ENCODE measurements at regions of chr19 and their contacts with region 1.

Region 1: DNA sequence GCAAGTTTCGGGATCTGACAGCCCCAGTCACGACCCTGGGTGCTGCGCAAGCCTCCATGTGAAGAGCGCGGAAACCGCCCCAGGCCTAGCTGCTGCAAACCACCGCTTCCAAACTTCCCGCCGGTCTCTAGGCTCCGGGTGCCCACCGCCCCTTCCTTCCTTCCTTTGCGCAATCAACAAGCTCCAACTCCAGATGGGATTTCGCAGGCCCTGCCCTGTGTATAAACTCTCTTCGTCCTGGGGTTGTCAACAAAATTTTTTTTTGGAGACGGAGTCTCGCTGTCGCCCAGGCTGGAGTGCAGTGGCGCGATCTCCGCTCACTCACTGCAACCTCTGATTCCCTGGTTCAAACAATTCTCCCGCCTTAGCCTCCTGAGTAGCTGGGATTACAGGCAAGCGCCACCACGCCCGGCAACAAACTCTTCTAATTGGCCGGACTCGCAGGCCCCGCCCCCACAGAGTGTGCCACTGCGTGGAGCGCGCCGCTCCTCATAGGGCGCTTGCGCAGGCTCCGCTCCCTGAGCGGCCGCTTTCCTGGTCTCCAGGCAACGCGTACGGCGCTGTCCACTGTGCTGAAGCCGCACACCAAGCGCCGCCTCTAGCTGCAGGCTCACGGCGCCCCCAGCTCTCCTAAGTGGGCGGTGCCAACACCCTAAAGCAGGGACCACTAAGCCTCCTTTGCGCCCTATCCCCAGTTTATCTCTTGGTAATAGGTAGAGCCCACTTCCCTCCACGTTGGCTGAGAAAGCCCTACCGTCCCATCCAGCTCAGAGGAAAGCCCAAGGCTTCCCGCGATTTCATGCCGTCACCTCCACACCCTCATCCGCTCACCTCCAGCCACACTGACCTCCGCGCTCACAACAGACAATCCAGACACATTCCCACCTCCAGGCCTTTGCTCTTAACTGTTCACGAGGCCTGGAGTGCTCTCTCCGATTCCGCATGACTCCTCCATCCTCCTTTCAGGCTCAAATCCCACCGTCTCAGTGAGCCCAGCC is 5.5 kb upstream of the QTRT1 start:
- DNase-seq: peak; percentile 84 to 87 (median 85)
- H3K4me3 ChIP-seq: peak overlapping the region in 1 of 2 donors; percentile 49
- H3K4me3 Mint-ChIP-seq: peak overlapping the region; percentile 84 to 93 (median 90)
- H3K27ac ChIP-seq: no peak overlapping the region
- H3K27ac Mint-ChIP-seq: peak overlapping the region in 6 of 7 donors; percentile 42 to 94 (median 84)
- H3K4me1 ChIP-seq: peaks cover 12% of the 10 kb centered on the region
- H3K4me1 Mint-ChIP-seq: peaks cover 10 to 26% (median 16%) of the 10 kb centered on the region in 4 donors
- H3K27me3 ChIP-seq: no peaks in the 10 kb centered on the region
- H3K27me3 Mint-ChIP-seq: peaks cover 3 to 12% of the 10 kb centered on the region in 2 donors

Region 2: DNA sequence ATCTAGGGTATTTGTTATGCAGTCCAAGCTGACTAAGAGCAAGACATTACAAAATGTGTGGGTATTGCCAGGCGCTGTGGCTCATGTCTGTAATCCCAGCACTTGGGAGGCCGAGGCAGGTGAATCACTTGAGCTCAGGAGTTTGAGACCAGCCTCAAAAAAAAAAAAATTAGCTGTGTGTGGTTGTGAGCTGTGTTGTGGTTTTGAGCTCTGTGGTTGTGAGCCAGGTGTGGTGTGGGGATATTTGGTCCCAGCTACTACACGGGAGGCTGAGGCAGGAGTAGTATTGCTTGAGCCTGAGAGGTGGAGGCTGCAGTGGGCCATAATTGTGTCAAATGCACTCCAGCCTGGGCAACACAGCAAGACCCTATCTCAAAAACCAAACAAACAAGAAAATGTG is 187.0 kb before region 1 on chr19:
- CTCF ChIA-PET with region 1: interaction called, 15 read pairs
- POLR2A ChIA-PET with region 1: no interaction called
- intact Hi-C with region 1: loop called (anchors 10 kb)
- DNase-seq: no peak
- H3K4me3 ChIP-seq: no peak overlapping the region
- H3K4me3 Mint-ChIP-seq: peak overlapping the region in 2 of 8 donors; percentile 11 to 12
- H3K27ac ChIP-seq: no peak overlapping the region
- H3K27ac Mint-ChIP-seq: peak overlapping the region in 2 of 7 donors; percentile 55 to 61
- H3K4me1 ChIP-seq: peaks cover 24% of the 10 kb centered on the region
- H3K4me1 Mint-ChIP-seq: peaks cover 15 to 35% (median 22%) of the 10 kb centered on the region in 4 donors
- H3K27me3 ChIP-seq: peaks cover 8% of the 10 kb centered on the region
- H3K27me3 Mint-ChIP-seq: peaks cover 8% of the 10 kb centered on the region in 2 donors

Region 3: GRCh38 chr19:10580979-10581631 is 114.6 kb before region 1 on chr19:
- CTCF ChIA-PET with region 1: interaction called, 126 read pairs
- POLR2A ChIA-PET with region 1: interaction called, 10 read pairs
- intact Hi-C with region 1: loop called (anchors 1 kb)
- DNase-seq: peak; percentile 84 to 88 (median 84)
- H3K4me3 ChIP-seq: no peak overlapping the region
- H3K4me3 Mint-ChIP-seq: peak overlapping the region in 4 of 8 donors; percentile 0 to 65 (median 30)
- H3K27ac ChIP-seq: no peak overlapping the region
- H3K27ac Mint-ChIP-seq: peak overlapping the region in 3 of 7 donors; percentile 4 to 26 (median 25)
- H3K4me1 ChIP-seq: peaks cover 22% of the 10 kb centered on the region
- H3K4me1 Mint-ChIP-seq: peaks cover 9 to 24% (median 16%) of the 10 kb centered on the region in 4 donors
- H3K27me3 ChIP-seq: no peaks in the 10 kb centered on the region
- H3K27me3 Mint-ChIP-seq: peaks cover 2% of the 10 kb centered on the region in 2 donors

Region 4: GRCh38 chr19:10644260-10645007 is 51.3 kb before region 1 on chr19:
- CTCF ChIA-PET with region 1: interaction called, 56 read pairs
- POLR2A ChIA-PET with region 1: interaction called, 9 read pairs
- intact Hi-C with region 1: loop called (anchors 1 kb)
- DNase-seq: peak; percentile 78 to 81 (median 80)
- H3K4me3 ChIP-seq: no peak overlapping the region
- H3K4me3 Mint-ChIP-seq: no peak overlapping the region
- H3K27ac ChIP-seq: peak overlapping the region; percentile 37
- H3K27ac Mint-ChIP-seq: peak overlapping the region; percentile 31 to 88 (median 75)
- H3K4me1 ChIP-seq: peaks cover 5% of the 10 kb centered on the region
- H3K4me1 Mint-ChIP-seq: peaks cover 7 to 28% (median 12%) of the 10 kb centered on the region in 4 donors
- H3K27me3 ChIP-seq: no peaks in the 10 kb centered on the region
- H3K27me3 Mint-ChIP-seq: no peaks in the 10 kb centered on the region

Region 5: GRCh38 chr19:10808937-10809652 is 113.4 kb after region 1 on chr19:
- CTCF ChIA-PET with region 1: no interaction called
- POLR2A ChIA-PET with region 1: no interaction called
- intact Hi-C with region 1: no loop called
- DNase-seq: peak; percentile 29 to 73 (median 37)
- H3K4me3 ChIP-seq: no peak overlapping the region
- H3K4me3 Mint-ChIP-seq: peak overlapping the region in 5 of 8 donors; percentile 36 to 57 (median 55)
- H3K27ac ChIP-seq: peak overlapping the region; percentile 24
- H3K27ac Mint-ChIP-seq: peak overlapping the region; percentile 48 to 94 (median 72)
- H3K4me1 ChIP-seq: peaks cover 17% of the 10 kb centered on the region
- H3K4me1 Mint-ChIP-seq: peaks cover 15 to 38% (median 22%) of the 10 kb centered on the region in 4 donors
- H3K27me3 ChIP-seq: no peaks in the 10 kb centered on the region
- H3K27me3 Mint-ChIP-seq: no peaks in the 10 kb centered on the region

Region 6: GRCh38 chr19:10835754-10836477 is 140.2 kb after region 1 on chr19 and contains the start of gene TMED1:
- CTCF ChIA-PET with region 1: no interaction called
- POLR2A ChIA-PET with region 1: interaction called, 10 read pairs
- intact Hi-C with region 1: no loop called
- DNase-seq: peak; percentile 94 to 95 (median 94)
- H3K4me3 ChIP-seq: peak within 1 kb of the TSS; percentile 64 to 89
- H3K4me3 Mint-ChIP-seq: peak within 1 kb of the TSS; percentile 96 to 100 (median 98)
- H3K27ac ChIP-seq: peak within 1 kb of the TSS; percentile 95
- H3K27ac Mint-ChIP-seq: peak within 1 kb of the TSS; percentile 99 to 100 (median 100)
- H3K4me1 ChIP-seq: peaks cover 17% of the 10 kb centered on the region
- H3K4me1 Mint-ChIP-seq: peaks cover 9 to 21% (median 13%) of the 10 kb centered on the region in 4 donors
- H3K27me3 ChIP-seq: no peaks in the 10 kb centered on the region
- H3K27me3 Mint-ChIP-seq: no peaks in the 10 kb centered on the region
- total RNA-seq, gene TMED1: 9.0 to 10.9 TPM

Measured in CD4-positive, alpha-beta memory T cell (primary cell).